ENCODE measurements at regions of chr9 and their contacts with region 1.

Region 1: GRCh38 chr9:86282077-86282978 is at the start of gene ISCA1:
- DNase-seq: peak; percentile 95
- H3K4me3 ChIP-seq: peak within 1 kb of the TSS; percentile 89
- H3K27ac ChIP-seq: peak within 1 kb of the TSS; percentile 76
- H3K4me1 ChIP-seq: peaks cover 33% of the 10 kb centered on the region
- CTCF ChIP-seq: no peak
- total RNA-seq, gene ISCA1: 20.6 and 21.8 TPM in 2 replicates

Region 2: GRCh38 chr9:86168256-86168655 is 114.1 kb before region 1 on chr9:
- CTCF ChIA-PET with region 1: no interaction called
- POLR2A ChIA-PET with region 1: no interaction called
- intact Hi-C with region 1: no loop called
- DNase-seq: no peak
- H3K4me3 ChIP-seq: no peak overlapping the region
- H3K27ac ChIP-seq: no peak overlapping the region
- H3K4me1 ChIP-seq: no peaks in the 10 kb centered on the region
- CTCF ChIP-seq: no peak

Region 3: GRCh38 chr9:86217076-86217755 is 65.1 kb before region 1 on chr9:
- CTCF ChIA-PET with region 1: no interaction called
- POLR2A ChIA-PET with region 1: no interaction called
- intact Hi-C with region 1: no loop called
- DNase-seq: no peak
- H3K4me3 ChIP-seq: no peak overlapping the region
- H3K27ac ChIP-seq: no peak overlapping the region
- H3K4me1 ChIP-seq: no peaks in the 10 kb centered on the region
- CTCF ChIP-seq: no peak

Region 4: GRCh38 chr9:86337469-86338108 is 55.3 kb after region 1 on chr9:
- CTCF ChIA-PET with region 1: no interaction called
- POLR2A ChIA-PET with region 1: interaction called, 3 read pairs
- intact Hi-C with region 1: loop called (anchors 5 kb)
- DNase-seq: peak; percentile 36
- H3K4me3 ChIP-seq: peak overlapping the region; percentile 56
- H3K27ac ChIP-seq: peak overlapping the region; percentile 55
- H3K4me1 ChIP-seq: peaks cover 34% of the 10 kb centered on the region
- CTCF ChIP-seq: no peak

Measured in OCI-LY7 (cell line).